ENCODE measurements at regions of chr14 and their contacts with region 1.

Region 1: GRCh38 chr14:76456200-76456599 is 80.3 kb downstream of the ESRRB start:
- DNase-seq: no peak
- ATAC-seq: no peak
- H3K4me3 ChIP-seq: no peak overlapping the region
- H3K27ac ChIP-seq: no peak overlapping the region
- H3K4me1 ChIP-seq: no peaks in the 10 kb centered on the region
- H3K27me3 ChIP-seq: no peaks in the 10 kb centered on the region

Region 2: DNA sequence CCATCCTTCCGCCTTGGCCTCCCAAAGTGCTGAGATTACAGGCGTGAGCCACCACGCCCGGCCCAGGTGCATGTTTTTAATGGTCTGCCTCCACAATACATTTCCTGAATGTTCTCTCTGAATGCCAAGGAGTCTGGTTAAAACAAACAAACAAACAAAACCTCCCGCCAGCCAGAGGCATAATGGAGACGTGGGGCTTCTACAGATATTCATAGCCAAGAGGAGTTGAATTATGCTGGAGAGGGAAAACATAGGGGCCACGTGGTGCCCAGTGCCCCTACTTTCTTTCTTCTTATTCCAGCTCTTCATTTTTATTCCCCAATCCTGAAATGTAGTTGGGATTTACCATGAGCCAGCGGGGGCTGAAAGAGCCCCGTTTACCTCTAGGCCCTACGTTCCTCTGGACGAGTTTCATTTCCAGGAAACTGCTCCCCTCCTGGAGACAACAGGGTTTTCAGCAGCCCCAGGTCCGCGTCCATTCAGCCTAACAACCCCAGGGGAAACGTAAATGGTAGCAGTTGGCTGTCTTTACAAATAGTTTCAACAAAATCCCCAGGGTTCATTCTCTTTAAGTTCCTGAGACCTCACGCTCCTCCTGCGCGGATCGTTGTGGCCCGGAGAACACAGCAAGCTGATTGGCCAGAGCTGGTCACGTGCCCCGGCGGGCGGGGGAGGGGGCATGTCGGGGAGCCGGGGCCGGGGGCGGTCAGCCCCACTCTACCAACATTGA is 188.7 kb before region 1 on chr14:
- intact Hi-C with region 1: no loop called
- DNase-seq: peak; percentile 69 to 92
- ATAC-seq: peak; percentile 82
- H3K4me3 ChIP-seq: peak overlapping the region; percentile 6 to 45
- H3K27ac ChIP-seq: no peak overlapping the region
- H3K4me1 ChIP-seq: no peaks in the 10 kb centered on the region
- H3K27me3 ChIP-seq: no peaks in the 10 kb centered on the region

Region 3: DNA sequence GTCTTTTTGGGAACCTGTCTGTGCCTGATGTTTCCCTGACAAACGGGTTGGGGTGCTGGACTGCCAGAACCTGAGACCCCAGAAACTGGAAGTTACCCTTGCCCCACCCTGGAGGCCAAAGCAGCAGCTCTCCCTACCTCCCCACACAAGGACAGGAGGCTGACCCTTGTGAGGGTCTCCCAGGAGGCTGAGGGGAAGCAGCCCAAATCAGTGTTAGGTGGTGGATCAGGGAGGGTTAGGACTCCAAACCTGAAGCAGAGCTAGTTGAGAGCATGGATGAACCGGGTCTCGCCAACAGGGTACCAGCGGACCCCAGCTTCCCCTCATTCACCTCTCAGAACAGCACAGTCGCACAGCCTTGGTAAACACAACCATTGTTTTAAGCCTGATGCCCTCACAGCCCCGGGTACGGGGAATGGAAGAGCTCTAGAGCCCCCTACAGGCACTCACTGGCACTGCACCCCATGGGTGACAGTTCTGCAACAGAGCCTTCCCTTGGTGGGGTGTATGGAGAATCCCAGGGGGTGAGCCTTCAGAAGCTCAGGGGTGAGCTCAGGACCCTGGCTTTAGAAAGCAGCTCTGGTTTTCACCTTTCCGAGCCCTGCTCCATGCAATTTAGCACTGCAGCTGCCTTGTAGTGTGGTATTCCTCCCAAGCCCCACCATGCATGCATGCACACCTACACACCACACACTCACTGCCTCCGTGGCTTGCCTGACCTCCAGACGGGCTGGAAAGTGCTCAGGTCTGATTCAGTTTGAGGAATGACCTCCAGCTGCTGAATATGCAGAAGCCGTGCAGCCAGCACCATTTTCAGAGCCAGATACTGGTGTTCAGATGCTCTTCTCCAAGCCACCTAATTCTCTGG is 69.1 kb before region 1 on chr14:
- intact Hi-C with region 1: no loop called
- DNase-seq: peak; percentile 73 to 88
- ATAC-seq: peak; percentile 90
- H3K4me3 ChIP-seq: no peak overlapping the region
- H3K27ac ChIP-seq: no peak overlapping the region
- H3K4me1 ChIP-seq: no peaks in the 10 kb centered on the region
- H3K27me3 ChIP-seq: peaks cover 0 to 2% of the 10 kb centered on the region in 2 donors

Region 4: GRCh38 chr14:76647697-76648298 is 191.6 kb after region 1 on chr14:
- intact Hi-C with region 1: loop called in 1 of 2 experiments (anchors 5 kb)
- DNase-seq: no peak
- ATAC-seq: peak; percentile 65
- H3K4me3 ChIP-seq: no peak overlapping the region
- H3K27ac ChIP-seq: no peak overlapping the region
- H3K4me1 ChIP-seq: no peaks in the 10 kb centered on the region
- H3K27me3 ChIP-seq: no peaks in the 10 kb centered on the region

Region 5: GRCh38 chr14:76672123-76672522 is 215.9 kb after region 1 on chr14:
- intact Hi-C with region 1: no loop called
- DNase-seq: no peak
- ATAC-seq: no peak
- H3K4me3 ChIP-seq: no peak overlapping the region
- H3K27ac ChIP-seq: no peak overlapping the region
- H3K4me1 ChIP-seq: no peaks in the 10 kb centered on the region
- H3K27me3 ChIP-seq: no peaks in the 10 kb centered on the region

Measured in aorta (tissue), 5 donors.